GM10248 (cell line): ENCODE measurements at regions of chr10 and their contacts with region 1.

Region 1: GRCh38 chr10:125783957-125784356 is 8.3 kb upstream of the MMP21 start:
- DNase-seq: peak; percentile 57
- CTCF ChIP-seq: no peak

Region 2: DNA sequence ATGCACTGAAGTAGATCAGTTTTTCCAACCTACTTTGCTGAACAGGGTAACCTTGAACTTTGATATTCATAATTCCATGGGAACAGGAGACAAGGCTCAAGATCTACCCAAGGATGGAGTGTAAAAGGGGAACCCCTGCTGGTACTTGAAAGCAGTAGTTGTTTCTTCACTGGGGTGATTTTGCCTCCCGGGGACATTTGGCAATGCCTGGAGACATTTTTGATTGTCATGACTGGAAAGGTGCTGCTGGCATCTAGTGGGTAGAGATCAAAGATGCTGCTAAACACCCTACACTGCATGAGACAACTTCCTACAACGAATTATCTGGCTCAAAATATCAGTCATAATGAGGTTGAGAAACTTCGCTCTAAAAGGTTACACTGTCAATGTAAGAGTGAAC is 408.7 kb before region 1 on chr10:
- CTCF ChIA-PET with region 1: no interaction called
- POLR2A ChIA-PET with region 1: no interaction called
- DNase-seq: no peak
- CTCF ChIP-seq: no peak

Region 3: GRCh38 chr10:125672884-125673283 is 111.1 kb before region 1 on chr10:
- CTCF ChIA-PET with region 1: no interaction called
- POLR2A ChIA-PET with region 1: no interaction called
- DNase-seq: no peak
- CTCF ChIP-seq: no peak

Region 4: DNA sequence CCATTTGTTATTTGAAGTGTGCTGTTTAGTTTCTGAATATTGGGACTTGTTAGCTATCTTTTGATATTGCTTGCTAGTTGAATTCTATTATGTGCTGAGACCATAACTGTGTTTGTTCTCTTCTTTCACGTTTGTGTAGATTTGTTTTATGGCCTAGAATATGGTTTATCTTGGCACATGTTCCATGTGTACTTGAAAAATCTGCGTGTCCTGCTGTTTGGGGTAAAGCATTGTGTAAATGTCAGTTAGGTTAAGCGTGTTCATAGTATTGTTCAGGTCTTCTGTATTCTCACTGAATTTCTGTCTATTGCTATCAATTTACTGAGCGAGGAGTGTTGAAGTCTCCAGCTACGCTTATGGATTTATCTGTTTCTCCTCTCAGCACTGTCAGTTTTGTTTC is 27.8 kb before region 1 on chr10:
- CTCF ChIA-PET with region 1: no interaction called
- POLR2A ChIA-PET with region 1: no interaction called
- DNase-seq: no peak
- CTCF ChIP-seq: no peak

Region 5: DNA sequence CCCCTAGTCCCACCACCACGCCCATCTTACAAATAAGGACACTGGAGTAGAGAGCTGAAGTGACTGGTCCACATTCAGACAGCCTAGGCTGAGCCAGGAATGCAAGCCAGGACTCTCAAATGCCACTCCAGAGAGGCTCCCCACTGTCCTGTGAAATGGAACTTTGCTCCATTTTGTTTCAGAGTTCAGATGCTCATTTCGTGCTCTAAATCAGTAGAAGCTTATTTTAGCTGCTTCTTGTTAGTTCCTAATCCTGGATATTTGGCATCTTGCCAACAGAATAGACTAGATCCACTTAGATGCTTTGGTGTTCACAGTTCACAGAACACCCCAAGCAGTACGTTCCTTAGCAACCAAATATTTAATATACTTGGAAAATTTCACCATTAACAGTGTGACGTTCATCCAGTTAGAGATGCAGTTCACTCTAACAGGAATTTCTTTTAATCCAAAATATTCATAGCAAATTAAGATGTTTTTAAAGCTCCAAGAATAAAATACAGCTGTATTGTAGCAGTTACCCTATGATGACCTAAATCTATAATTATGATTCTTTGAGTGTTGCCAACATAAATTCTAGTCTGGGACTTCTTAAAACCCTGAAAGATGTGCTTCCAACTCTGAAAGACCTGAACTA is 15.6 kb before region 1 on chr10:
- CTCF ChIA-PET with region 1: no interaction called
- POLR2A ChIA-PET with region 1: no interaction called
- DNase-seq: no peak
- CTCF ChIP-seq: no peak

Region 6: GRCh38 chr10:125797994-125798662 is 14.2 kb after region 1 on chr10:
- CTCF ChIA-PET with region 1: interaction called, 10 read pairs
- POLR2A ChIA-PET with region 1: interaction called, 4 read pairs
- DNase-seq: no peak
- CTCF ChIP-seq: no peak